ENCODE measurements at regions of chr12 and their contacts with region 1.

Region 1: DNA sequence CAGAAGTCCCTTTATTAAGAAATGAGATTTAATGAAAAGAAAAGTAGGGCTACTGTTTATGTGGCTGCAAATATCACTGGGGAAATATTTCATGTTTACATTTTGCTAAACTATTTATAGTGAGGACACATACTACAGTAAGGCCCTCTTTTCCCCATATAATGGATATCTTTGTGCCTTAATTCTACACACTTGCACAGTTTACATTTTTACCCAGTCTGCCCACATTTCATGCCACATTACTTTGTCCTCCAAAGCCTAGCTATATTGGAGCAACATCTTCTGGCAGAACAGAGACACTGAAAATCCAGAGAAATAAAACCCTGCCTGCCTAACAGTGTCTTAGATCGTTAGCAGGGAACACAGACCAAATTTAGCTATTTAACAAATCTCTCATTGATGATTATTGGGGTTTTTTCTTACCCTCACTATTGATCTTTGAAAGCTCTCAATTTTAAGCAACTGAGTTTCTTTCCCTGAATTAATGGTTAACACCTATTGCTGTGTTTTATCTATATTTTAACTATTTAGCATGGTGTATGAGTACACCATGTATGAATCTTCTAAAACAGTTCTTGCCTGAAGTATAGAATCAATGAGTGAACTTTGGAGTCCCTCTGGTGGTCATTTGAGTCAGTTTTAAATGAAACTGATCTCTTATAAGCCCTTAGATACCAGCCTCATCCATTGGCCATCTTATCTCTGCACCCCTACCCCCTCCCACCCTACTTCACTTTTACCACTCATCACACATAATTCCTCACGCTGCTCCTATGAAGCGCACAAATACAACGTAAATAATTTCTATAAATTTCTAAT is 170.2 kb downstream of the BCAT1 start:
- DNase-seq: no peak
- ATAC-seq: peak; percentile 85
- H3K4me3 Mint-ChIP-seq: no peak overlapping the region
- H3K27ac Mint-ChIP-seq: no peak overlapping the region
- H3K4me1 Mint-ChIP-seq: peaks cover 3% of the 10 kb centered on the region
- H3K27me3 Mint-ChIP-seq: peaks cover 5% of the 10 kb centered on the region

Region 2: GRCh38 chr12:23204933-23205778 is 1573.5 kb before region 1 on chr12:
- CTCF ChIA-PET with region 1: no interaction called
- POLR2A ChIA-PET with region 1: no interaction called
- intact Hi-C with region 1: loop called (anchors 1 to 2 kb)
- DNase-seq: no peak
- ATAC-seq: peak; percentile 51
- H3K4me3 Mint-ChIP-seq: no peak overlapping the region
- H3K27ac Mint-ChIP-seq: no peak overlapping the region
- H3K4me1 Mint-ChIP-seq: no peaks in the 10 kb centered on the region
- H3K27me3 Mint-ChIP-seq: peaks cover 5% of the 10 kb centered on the region

Region 3: GRCh38 chr12:24109381-24110039 is 669.2 kb before region 1 on chr12:
- CTCF ChIA-PET with region 1: no interaction called
- POLR2A ChIA-PET with region 1: no interaction called
- intact Hi-C with region 1: loop called in 1 of 2 experiments (anchors 5 kb)
- DNase-seq: no peak
- ATAC-seq: no peak
- H3K4me3 Mint-ChIP-seq: no peak overlapping the region
- H3K27ac Mint-ChIP-seq: no peak overlapping the region
- H3K4me1 Mint-ChIP-seq: no peaks in the 10 kb centered on the region
- H3K27me3 Mint-ChIP-seq: no peaks in the 10 kb centered on the region

Region 4: DNA sequence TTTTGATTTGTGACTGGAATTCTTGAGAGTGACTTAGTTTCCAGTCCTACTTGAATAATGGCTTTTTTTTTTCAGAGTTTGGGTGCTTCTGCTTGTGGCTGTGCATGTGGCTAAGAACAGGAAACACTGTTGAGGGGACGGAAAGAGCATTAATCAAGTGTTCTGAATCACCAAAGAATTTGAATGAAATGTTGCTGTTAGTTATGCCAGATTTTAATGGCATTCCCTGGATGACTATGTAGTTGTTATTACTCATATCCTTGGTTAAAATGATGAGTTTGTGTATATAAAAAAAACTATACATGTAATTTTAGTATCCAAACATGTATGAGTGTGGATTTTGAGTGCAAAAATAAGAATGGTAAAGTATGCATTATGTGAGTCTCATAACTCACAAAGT is 177.7 kb before region 1 on chr12:
- CTCF ChIA-PET with region 1: interaction called, 3 read pairs
- POLR2A ChIA-PET with region 1: no interaction called
- intact Hi-C with region 1: loop called in 1 of 2 experiments (anchors 2 kb)
- DNase-seq: peak; percentile 18
- ATAC-seq: peak; percentile 78
- H3K4me3 Mint-ChIP-seq: no peak overlapping the region
- H3K27ac Mint-ChIP-seq: no peak overlapping the region
- H3K4me1 Mint-ChIP-seq: peaks cover 13% of the 10 kb centered on the region
- H3K27me3 Mint-ChIP-seq: peaks cover 4% of the 10 kb centered on the region

Region 5: DNA sequence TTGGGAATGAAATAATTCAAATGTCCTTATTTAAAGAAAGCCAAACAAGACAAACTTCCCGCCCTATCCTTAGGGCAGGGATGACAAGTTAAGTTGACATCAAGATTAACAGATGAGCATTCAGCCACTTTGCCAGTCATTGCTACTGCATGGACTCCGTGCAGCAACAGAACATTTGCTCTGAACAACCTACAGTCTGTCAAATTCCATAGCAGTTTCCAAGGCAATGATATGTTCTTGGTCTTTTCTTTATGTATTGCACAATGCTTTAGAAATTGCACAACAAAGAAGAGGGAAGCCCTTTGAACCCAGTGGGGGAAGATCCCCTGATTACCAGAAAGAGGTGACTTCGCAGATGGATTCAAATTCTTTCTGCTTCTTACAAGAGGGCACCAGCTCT is 99.6 kb before region 1 on chr12:
- CTCF ChIA-PET with region 1: no interaction called
- POLR2A ChIA-PET with region 1: no interaction called
- intact Hi-C with region 1: no loop called
- DNase-seq: no peak
- ATAC-seq: no peak
- H3K4me3 Mint-ChIP-seq: no peak overlapping the region
- H3K27ac Mint-ChIP-seq: no peak overlapping the region
- H3K4me1 Mint-ChIP-seq: no peaks in the 10 kb centered on the region
- H3K27me3 Mint-ChIP-seq: no peaks in the 10 kb centered on the region

Region 6: GRCh38 chr12:24754690-24755638 is 23.7 kb before region 1 on chr12:
- CTCF ChIA-PET with region 1: no interaction called
- POLR2A ChIA-PET with region 1: no interaction called
- intact Hi-C with region 1: no loop called
- DNase-seq: peak; percentile 47
- ATAC-seq: peak; percentile 92
- H3K4me3 Mint-ChIP-seq: no peak overlapping the region
- H3K27ac Mint-ChIP-seq: peak overlapping the region; percentile 84
- H3K4me1 Mint-ChIP-seq: peaks cover 31% of the 10 kb centered on the region
- H3K27me3 Mint-ChIP-seq: peaks cover 16% of the 10 kb centered on the region

Region 7: DNA sequence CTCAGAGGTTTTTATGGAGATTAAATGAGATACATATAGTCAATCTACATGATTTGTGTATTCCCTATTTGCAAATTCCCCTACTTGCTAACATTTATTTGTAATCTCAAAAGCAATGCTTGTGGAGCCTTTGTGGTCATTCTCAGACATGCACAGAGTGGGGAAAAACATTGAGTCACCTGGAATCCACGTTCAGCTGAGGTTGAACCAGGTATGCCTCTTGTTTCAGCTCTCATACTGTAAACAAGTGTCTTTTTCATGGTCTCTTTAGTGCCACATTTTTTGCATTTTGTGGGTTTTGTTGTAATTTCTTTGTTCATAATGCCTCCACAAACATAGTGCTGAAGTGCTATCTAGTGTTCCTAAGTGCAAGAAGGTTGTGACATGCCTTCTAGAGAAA is 11.7 kb before region 1 on chr12:
- CTCF ChIA-PET with region 1: interaction called, 11 read pairs
- POLR2A ChIA-PET with region 1: no interaction called
- intact Hi-C with region 1: no loop called
- DNase-seq: peak; percentile 27
- ATAC-seq: peak; percentile 60
- H3K4me3 Mint-ChIP-seq: no peak overlapping the region
- H3K27ac Mint-ChIP-seq: no peak overlapping the region
- H3K4me1 Mint-ChIP-seq: peaks cover 11% of the 10 kb centered on the region
- H3K27me3 Mint-ChIP-seq: peaks cover 4% of the 10 kb centered on the region

Region 8: DNA sequence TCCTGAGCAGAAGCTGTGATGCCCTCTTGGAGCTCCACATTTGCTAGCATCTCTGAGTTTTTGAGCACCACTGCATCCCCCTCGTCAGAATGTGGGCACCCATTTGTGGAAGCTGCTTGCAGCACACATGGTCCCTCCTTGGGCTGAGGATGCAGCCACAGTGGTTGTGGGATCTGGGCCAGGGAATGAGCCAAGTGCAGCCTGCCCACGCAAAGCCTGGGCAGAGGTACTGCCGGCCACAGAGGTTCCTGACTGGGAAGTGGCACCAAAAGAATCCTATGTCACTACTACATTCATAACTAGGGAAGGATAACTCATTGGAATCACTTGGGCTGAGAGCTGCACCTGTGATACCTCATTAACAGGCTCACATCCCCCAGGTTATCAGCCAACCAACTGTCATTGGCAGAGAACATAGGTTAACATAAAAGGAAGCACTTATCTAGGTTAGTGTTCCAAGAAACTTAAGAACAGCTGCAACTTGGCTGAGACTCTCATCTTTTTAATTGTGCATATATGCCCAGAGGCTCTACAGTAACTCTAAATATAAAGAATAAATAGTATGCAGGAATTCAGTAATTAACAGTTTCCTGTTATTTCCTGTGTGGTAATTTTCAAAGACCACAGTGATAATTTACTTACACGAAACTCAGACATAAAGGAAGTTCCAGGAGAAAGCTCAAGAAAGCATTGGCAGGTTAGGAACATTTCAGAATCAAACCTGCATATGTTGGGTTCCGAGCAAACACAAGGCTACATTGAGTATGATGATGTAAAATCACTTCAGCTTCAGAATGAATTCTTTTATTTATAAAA is 24.9 kb after region 1 on chr12:
- CTCF ChIA-PET with region 1: no interaction called
- POLR2A ChIA-PET with region 1: no interaction called
- intact Hi-C with region 1: no loop called
- DNase-seq: no peak
- ATAC-seq: no peak
- H3K4me3 Mint-ChIP-seq: no peak overlapping the region
- H3K27ac Mint-ChIP-seq: no peak overlapping the region
- H3K4me1 Mint-ChIP-seq: peaks cover 5% of the 10 kb centered on the region
- H3K27me3 Mint-ChIP-seq: no peaks in the 10 kb centered on the region

Region 9: DNA sequence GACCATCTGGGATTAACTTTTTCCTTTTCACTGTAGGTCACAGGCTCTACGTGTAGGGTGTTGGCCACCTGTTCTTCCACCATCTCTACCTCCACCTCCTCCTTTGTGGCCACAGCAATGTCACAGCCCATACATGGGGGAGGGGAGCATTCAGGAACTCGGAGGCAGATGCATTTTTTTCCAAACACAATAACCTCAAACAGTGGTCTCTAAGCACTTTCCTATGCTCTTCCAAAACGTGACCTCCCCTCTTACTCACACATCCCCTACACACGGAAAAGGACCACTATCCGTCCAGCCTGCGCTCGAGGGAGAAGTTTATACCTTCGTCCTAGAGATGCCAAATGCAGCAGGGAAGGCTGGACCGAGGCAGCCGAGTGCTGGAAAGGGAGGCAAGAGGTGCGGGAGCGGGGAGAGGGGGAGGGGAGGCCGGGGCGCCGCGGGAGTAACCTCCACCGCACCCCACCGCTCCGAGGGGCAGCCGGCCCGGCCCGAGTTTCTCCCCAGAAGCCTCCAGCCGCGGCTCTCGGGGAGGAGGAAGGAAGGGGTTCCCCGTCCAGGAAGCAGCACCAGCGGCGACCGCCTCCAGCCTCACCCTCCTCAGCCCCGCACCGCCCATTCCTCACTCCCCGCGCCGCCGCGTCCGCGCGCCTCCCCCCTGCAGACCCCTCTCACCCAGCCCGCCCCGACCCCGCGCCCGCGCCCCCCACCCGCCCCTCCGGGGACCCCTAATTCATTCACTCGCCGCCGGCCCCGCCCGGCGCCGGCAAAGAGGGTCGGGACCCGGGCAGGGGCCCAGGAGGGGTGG is 471.4 kb after region 1 on chr12:
- CTCF ChIA-PET with region 1: no interaction called
- POLR2A ChIA-PET with region 1: no interaction called
- intact Hi-C with region 1: no loop called
- DNase-seq: peak; percentile 64
- ATAC-seq: peak; percentile 57
- H3K4me3 Mint-ChIP-seq: peak overlapping the region; percentile 83
- H3K27ac Mint-ChIP-seq: peak overlapping the region; percentile 89
- H3K4me1 Mint-ChIP-seq: peaks cover 39% of the 10 kb centered on the region
- H3K27me3 Mint-ChIP-seq: peaks cover 3% of the 10 kb centered on the region

Measured in activated CD4-positive, alpha-beta T cell treated with anti-CD3 and anti-CD28 coated beads for 36 hours (primary cell).